HepG2 (cell line): ENCODE measurements at regions of chr1 and their contacts with region 1.

Region 1: GRCh38 chr1:228837817-228838716 is 102.8 kb downstream of the RHOU start:
- DNase-seq: peak; percentile 98
- ATAC-seq: peak; percentile 89
- H3K4me3 ChIP-seq: peak overlapping the region; percentile 24 to 69 (median 40); a peak in 5 of 6 replicates
- H3K27ac ChIP-seq: peak overlapping the region; percentile 99
- H3K4me1 ChIP-seq: peaks cover 91% of the 10 kb centered on the region
- H3K27me3 ChIP-seq: no peaks in the 10 kb centered on the region; a peak in 1 of 5 replicates
- CTCF ChIP-seq: no peak
- EP300 ChIP-seq: peak in 1 of 2 experiments; percentile 89; a peak in 3 of 4 replicates
- POLR2A ChIP-seq: peak; percentile 86 to 88
- RAD21 ChIP-seq: peak; percentile 7; the same call in 1 of the 2 replicates

Region 2: DNA sequence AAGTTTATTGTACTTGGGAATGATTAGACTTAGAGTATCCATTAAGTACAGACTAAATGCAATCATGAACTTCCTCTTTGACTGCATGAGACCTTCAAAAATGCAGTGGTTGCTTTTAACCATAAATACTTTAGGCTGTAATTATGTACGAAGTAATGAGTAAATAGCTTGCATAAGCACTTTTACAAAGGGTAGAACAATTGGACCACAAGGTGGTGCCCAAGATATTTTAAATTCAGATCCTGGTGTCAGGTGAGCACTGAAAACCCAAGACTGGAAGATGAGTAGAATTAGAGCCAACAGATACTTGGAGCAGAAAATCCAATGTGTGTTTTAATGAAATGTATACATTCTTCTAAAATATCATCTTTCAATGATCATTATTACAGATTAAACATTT is 146.1 kb before region 1 on chr1:
- CTCF ChIA-PET with region 1: no interaction called
- POLR2A ChIA-PET with region 1: no interaction called
- in situ Hi-C with region 1: no loop called
- intact Hi-C with region 1: no loop called
- DNase-seq: peak; percentile 72
- ATAC-seq: 0 out of 3 replicates have a peak, but pooled peaks have one; percentile 40
- H3K4me3 ChIP-seq: no peak overlapping the region
- H3K27ac ChIP-seq: no peak overlapping the region
- H3K4me1 ChIP-seq: peaks cover 17% of the 10 kb centered on the region; the same call in 1 of the 2 replicates
- H3K27me3 ChIP-seq: no peaks in the 10 kb centered on the region; a peak in 1 of 5 replicates
- CTCF ChIP-seq: peak; percentile 60
- EP300 ChIP-seq: no peak
- POLR2A ChIP-seq: no peak
- RAD21 ChIP-seq: peak; percentile 53

Region 3: DNA sequence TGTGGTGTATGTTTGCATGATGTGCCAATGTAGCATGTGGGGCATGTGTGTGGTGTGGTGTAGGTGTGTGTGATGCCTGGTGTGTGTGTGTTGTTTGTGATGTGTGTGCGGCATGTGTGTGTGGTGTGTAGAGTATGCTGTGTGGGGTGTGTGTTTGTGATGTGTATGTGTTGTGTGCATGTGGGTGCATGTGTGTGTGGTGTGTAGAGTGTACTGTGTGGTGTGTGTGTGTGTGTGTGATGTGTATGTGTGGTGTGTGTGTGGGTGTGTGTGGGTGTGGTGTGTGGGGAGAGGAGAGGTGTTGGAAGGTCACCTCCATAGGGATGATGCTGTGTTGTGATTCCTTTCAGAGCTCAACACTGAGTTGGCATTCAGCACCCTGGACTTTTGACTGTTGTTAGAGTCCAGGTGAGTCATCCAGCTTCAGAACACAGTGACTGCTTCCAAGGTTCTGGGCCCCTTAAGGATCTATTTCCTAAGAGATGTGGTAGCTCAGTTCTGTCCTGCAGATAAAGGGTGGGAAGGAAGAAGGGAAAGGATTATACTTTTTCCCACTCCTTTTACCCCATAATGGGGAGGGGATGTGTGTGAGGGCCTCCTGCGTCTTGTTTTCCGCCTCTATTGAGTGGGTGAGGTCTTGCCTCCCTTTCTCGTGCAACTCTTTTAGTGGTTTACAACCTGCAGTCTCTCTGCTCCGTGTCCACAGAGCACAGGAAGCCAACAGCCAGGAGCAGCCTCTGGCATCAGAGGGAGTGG is 55.2 kb before region 1 on chr1:
- CTCF ChIA-PET with region 1: no interaction called
- POLR2A ChIA-PET with region 1: interaction called, 21 read pairs
- in situ Hi-C with region 1: no loop called
- intact Hi-C with region 1: loop called (anchors 1 kb)
- DNase-seq: peak; percentile 80
- ATAC-seq: peak; percentile 81
- H3K4me3 ChIP-seq: peak overlapping the region in 1 of 3 experiments; percentile 22; a peak in 2 of 6 replicates
- H3K27ac ChIP-seq: peak overlapping the region; percentile 76
- H3K4me1 ChIP-seq: peaks cover 41% of the 10 kb centered on the region
- H3K27me3 ChIP-seq: no peaks in the 10 kb centered on the region; a peak in 1 of 5 replicates
- CTCF ChIP-seq: no peak
- EP300 ChIP-seq: peak in 1 of 2 experiments; percentile 35; a peak in 1 of 4 replicates
- POLR2A ChIP-seq: no peak
- RAD21 ChIP-seq: no peak

Region 4: DNA sequence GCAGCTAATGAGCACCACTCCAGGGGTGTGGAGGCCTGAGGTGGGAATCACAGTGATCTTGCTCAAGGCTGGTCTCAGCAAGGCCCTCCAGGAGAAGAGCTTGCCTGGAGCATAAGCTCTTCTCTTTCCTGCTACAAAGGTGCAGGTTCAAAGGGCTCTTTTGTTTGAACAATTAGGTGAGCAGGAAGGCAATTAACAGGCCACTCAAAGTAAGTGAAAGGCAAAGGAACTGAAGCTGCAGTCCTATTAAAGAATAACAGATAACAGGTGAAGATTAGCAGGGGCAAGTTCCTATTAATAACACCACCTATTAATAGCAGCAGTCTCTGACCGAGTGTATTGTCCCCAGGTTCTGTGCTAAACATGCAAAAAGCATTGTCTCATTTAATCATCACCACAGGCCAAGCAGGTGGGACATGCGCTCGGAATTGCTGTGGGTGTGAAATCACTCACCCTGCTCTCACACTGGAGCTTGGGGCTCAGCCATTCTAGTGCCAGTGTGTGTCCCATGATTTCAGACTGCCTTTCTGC is 11.0 kb after region 1 on chr1:
- CTCF ChIA-PET with region 1: no interaction called
- POLR2A ChIA-PET with region 1: interaction called, 44 read pairs
- in situ Hi-C with region 1: no loop called
- intact Hi-C with region 1: no loop called
- DNase-seq: peak; percentile 70
- ATAC-seq: peak; percentile 82
- H3K4me3 ChIP-seq: 0 out of 6 replicates have a peak overlapping the region, but pooled peaks of 1 of the 3 experiments have one; percentile 9
- H3K27ac ChIP-seq: peak overlapping the region; percentile 53
- H3K4me1 ChIP-seq: peaks cover 57% of the 10 kb centered on the region
- H3K27me3 ChIP-seq: no peaks in the 10 kb centered on the region
- CTCF ChIP-seq: no peak
- EP300 ChIP-seq: peak in 1 of 2 experiments; percentile 60; a peak in 1 of 4 replicates
- POLR2A ChIP-seq: no peak
- RAD21 ChIP-seq: no peak

Region 5: DNA sequence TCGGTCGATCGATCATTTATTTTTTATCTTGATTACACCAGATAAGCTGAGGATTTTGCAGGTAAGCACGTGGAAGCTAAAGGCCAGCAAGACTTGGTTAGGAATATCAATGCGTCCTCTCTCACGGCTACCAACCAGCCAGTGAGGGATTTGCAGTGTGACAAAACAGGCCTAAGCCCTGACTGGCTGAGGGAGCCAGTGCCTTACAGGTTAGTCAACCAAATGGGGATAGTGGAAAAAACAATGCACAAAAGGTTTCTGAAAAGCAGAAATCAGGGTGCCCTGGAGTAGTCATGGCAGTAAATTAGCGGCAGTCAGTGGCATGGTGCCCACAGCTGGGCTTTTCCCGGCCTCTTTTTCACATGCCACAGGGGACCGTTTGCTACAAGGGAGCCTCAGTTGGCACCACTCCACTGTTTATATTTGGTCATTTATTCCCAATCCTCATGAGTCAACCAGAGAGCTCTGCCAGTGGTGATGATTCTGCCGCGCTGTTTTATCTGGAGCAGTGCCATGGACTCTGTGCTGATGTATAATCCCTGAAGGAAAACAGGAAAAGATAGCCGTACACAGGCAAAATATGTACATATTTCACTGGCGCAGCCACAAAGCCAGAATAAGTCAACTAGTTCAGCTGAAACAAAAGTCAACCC is 64.8 kb after region 1 on chr1:
- CTCF ChIA-PET with region 1: no interaction called
- POLR2A ChIA-PET with region 1: interaction called, 14 read pairs
- in situ Hi-C with region 1: no loop called
- intact Hi-C with region 1: no loop called
- DNase-seq: peak; percentile 91
- ATAC-seq: peak; percentile 89
- H3K4me3 ChIP-seq: peak overlapping the region in 2 of 3 experiments; percentile 31 to 50; a peak in 4 of 6 replicates
- H3K27ac ChIP-seq: peak overlapping the region; percentile 49
- H3K4me1 ChIP-seq: peaks cover 84% of the 10 kb centered on the region
- H3K27me3 ChIP-seq: no peaks in the 10 kb centered on the region; a peak in 1 of 5 replicates
- CTCF ChIP-seq: no peak
- EP300 ChIP-seq: peak in 1 of 2 experiments; percentile 65; a peak in 1 of 4 replicates
- POLR2A ChIP-seq: no peak
- RAD21 ChIP-seq: no peak

Region 6: DNA sequence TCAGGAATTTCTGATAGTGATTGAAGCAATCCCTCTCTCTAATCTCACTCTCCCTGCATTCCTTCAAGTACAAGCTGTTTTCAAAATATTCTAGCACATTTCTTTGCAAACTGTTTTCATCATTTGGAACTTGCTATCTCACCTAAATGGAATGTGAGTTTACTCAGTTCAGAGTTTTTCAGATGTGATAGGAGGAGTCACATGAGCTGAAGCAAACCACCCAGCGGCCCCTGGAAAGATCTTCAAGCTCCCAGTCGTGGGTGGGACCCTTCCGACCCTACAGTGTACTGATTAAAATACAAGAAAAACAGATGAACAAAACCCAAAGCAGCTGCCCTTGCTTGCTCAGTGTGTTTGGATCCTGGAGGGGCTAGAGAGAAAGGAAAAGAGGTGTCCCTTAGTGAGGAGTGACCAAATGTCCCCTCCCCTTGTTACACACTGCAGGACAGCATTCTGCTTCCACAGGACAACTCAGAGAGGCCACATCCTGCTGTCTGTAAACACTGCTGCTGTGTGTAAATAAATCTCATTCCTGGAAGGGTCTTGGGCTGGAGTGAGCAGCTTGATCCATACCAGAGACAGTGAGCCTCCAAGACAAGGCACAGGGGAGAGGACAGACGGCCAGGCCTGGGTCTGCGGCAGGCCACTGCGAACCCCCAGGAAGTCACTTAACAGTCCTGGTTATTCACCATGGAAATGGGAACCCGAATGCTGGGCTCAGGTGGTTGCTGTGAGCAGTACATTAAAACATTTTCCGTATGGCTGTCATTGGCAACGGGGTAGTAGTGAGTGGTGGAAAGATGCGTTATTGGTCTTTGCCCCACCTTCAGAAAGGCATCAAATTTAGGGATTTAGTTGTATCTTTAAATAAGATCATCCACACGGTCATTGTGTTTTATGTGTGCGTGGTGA is 126.4 kb after region 1 on chr1:
- CTCF ChIA-PET with region 1: no interaction called
- POLR2A ChIA-PET with region 1: interaction called, 33 read pairs
- in situ Hi-C with region 1: no loop called
- intact Hi-C with region 1: no loop called
- DNase-seq: peak; percentile 88
- ATAC-seq: peak; percentile 97
- H3K4me3 ChIP-seq: peak overlapping the region; percentile 9 to 39 (median 36); a peak in 5 of 6 replicates
- H3K27ac ChIP-seq: peak overlapping the region; percentile 64
- H3K4me1 ChIP-seq: peaks cover 44% of the 10 kb centered on the region
- H3K27me3 ChIP-seq: no peaks in the 10 kb centered on the region
- CTCF ChIP-seq: no peak
- EP300 ChIP-seq: peak in 1 of 2 experiments; percentile 66; a peak in 1 of 4 replicates
- POLR2A ChIP-seq: peak in 1 of 2 experiments; percentile 29; a peak in 1 of 4 replicates
- RAD21 ChIP-seq: no peak

Region 7: GRCh38 chr1:229003233-229004031 is 165.4 kb after region 1 on chr1:
- CTCF ChIA-PET with region 1: no interaction called
- POLR2A ChIA-PET with region 1: no interaction called
- in situ Hi-C with region 1: no loop called
- intact Hi-C with region 1: no loop called
- DNase-seq: peak; percentile 92
- ATAC-seq: peak; percentile 92
- H3K4me3 ChIP-seq: peak overlapping the region in 1 of 3 experiments; percentile 23; a peak in 1 of 6 replicates
- H3K27ac ChIP-seq: peak overlapping the region; percentile 69
- H3K4me1 ChIP-seq: peaks cover 70% of the 10 kb centered on the region
- H3K27me3 ChIP-seq: no peaks in the 10 kb centered on the region
- CTCF ChIP-seq: 0 out of 2 replicates have a peak, but pooled peaks have one; percentile 8
- EP300 ChIP-seq: peak; percentile 35 to 89; a peak in 2 of 4 replicates
- POLR2A ChIP-seq: no peak
- RAD21 ChIP-seq: no peak

Region 8: DNA sequence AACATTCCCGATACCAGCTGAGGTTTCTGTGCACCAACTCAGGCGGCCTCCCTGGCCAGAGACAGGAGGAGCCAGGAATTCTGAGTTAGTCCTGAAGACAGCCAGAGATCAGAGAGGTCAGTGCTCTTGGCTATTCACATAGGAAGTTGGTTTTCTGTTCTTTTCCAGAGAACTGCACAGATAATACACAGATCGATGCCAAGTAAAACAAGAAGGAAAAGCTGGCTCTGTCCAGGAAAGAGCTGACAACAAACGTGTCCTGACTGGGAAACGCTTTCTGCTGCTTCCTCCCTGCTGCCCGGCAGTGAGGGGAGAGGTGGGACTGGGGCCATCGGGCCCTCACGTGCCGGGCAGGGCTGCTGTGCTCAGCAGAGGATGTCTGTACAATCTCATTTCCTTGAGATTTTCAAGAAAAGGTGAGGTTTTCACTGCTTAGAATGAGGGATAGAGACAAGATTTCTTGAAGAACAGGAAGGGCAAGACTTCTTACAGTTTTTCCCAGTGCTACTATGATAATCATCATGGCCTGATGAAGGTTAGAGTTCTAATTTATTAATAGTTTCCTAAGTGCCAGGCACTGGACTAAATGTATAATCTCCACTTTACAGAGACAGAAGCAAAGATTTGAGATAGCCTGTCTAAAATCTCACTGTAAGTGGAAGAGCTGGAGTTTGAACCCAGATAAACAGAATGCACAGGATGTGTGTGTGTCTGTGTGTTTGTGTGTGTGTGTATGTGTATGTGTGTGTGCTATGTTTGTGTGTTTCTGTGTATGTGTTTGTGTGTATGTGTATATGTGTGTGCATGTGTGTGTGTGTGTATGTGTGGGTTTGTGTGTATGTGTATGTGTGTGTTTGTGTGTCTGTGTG is 221.8 kb after region 1 on chr1:
- CTCF ChIA-PET with region 1: no interaction called
- POLR2A ChIA-PET with region 1: interaction called, 3 read pairs
- in situ Hi-C with region 1: no loop called
- intact Hi-C with region 1: loop called (anchors 2 kb)
- DNase-seq: no peak
- ATAC-seq: peak; percentile 28
- H3K4me3 ChIP-seq: no peak overlapping the region
- H3K27ac ChIP-seq: peak overlapping the region; percentile 4
- H3K4me1 ChIP-seq: peaks cover 73% of the 10 kb centered on the region
- H3K27me3 ChIP-seq: no peaks in the 10 kb centered on the region
- CTCF ChIP-seq: no peak
- EP300 ChIP-seq: no peak
- POLR2A ChIP-seq: no peak
- RAD21 ChIP-seq: no peak